ENCODE measurements at regions of chr11 and their contacts with region 1.

Region 1: DNA sequence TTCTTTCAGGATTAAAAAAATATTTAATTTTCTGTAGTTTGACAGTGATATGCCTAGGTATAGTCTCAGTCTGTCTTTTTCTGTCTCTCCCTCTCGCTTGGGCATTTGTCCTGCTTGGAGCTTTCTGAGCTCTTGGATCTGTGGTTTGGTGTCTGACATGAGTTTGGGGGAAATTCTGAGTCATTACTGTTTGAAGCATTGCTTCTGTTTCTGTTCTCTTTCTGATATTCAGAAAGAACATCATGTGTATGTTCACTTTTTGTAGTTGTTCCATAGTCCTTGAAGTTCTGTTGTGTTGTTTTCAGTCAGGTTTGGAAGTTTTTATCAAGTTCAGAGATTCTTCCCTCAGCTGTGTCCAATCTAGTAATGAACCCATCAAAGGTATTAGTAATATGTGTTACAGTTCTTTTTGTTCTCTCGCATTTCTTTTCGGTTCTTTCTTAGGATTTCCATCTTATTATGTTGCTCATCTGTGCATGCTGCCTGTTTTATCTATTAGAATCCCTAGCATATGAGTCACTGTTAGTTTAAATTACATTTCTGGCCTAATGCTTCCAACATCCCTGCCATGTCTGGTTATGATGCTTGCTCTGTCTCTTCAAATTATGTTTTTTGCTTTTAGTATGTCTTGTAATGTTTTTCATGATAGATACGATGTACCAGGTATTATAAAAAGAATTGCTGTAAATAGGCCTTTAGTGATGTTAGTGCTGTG is 48.4 kb downstream of the DDX10 start:
- DNase-seq: no peak
- H3K4me3 Mint-ChIP-seq: no peak overlapping the region
- H3K27ac Mint-ChIP-seq: peak overlapping the region; percentile 13
- H3K4me1 Mint-ChIP-seq: peaks cover 23% of the 10 kb centered on the region
- H3K27me3 Mint-ChIP-seq: no peaks in the 10 kb centered on the region

Region 2: DNA sequence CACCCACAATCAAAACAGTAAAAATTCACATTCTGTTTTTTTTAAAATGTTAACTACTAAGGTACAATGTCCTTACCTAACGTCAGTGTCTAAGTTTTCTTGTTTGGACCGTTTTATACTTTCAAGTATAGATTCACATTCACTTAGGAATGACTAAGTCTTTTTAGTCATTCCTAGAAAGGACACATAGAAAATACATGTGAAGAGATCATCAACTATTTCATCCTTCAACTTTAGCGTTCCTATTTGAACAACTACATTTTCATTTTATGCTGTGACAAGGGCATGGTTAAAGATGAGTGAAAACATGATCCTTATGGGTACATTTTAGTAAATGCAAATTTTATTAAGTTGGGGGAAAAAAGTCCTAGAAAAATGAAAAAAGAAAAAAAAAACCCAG is 14.4 kb after region 1 on chr11:
- CTCF ChIA-PET with region 1: interaction called, 4 read pairs
- intact Hi-C with region 1: loop called (anchors 1 kb)
- DNase-seq: no peak
- H3K4me3 Mint-ChIP-seq: no peak overlapping the region
- H3K27ac Mint-ChIP-seq: no peak overlapping the region
- H3K4me1 Mint-ChIP-seq: peaks cover 43% of the 10 kb centered on the region
- H3K27me3 Mint-ChIP-seq: no peaks in the 10 kb centered on the region